MCF 10A (cell line): ENCODE measurements at regions of chr2 and their contacts with region 1.

Region 1: DNA sequence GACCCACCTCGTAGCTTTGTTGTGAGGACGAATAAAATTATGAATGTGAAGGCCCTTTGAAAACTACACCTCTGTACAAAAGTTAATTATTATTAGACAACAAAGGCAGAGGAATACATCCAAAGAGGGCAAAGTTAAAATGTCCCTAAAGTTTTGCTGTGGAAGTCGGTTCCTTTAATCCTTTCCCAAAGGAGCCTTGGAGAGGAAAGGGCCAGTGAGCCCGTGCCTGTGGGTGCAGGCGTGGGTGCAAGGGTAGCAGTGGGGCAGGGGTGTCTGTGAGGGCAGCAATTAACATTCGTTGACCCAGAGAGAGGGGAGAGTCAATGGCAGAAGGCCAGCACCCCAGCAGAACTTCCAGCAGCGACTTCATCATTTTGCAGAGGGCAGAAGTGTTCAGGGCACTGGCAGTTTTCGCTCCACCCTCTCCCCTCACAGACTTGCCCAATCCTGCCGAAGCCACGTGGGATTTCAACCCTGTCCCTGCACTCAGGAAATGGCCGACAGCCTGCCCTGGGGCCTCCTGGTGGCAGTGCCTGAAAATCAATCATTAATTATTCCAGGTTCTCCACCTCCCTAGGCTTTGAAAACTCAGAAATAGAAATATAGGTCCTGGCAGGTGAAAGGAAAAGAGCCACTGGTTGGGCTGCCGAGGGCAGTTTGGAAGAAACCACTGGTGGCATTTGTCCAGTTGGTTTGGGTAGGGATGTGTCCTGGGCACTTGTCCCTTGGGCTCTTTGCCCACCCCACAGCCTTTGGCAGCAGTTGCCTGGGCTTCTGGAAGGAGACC is 4.2 kb upstream of the PAX8 start:
- DNase-seq: peak; percentile 78
- H3K4me3 Mint-ChIP-seq: peak overlapping the region; percentile 33
- H3K27ac Mint-ChIP-seq: peak overlapping the region; percentile 84
- H3K4me1 Mint-ChIP-seq: peaks cover 42% of the 10 kb centered on the region
- H3K27me3 Mint-ChIP-seq: no peaks in the 10 kb centered on the region
- CTCF ChIP-seq: no peak

Region 2: GRCh38 chr2:113211226-113212105 is 71.5 kb before region 1 on chr2:
- CTCF ChIA-PET with region 1: interaction called, 9 read pairs
- POLR2A ChIA-PET with region 1: no interaction called
- intact Hi-C with region 1: loop called (anchors 2 kb)
- DNase-seq: peak; percentile 78
- H3K4me3 Mint-ChIP-seq: no peak overlapping the region
- H3K27ac Mint-ChIP-seq: peak overlapping the region; percentile 92
- H3K4me1 Mint-ChIP-seq: peaks cover 30% of the 10 kb centered on the region
- H3K27me3 Mint-ChIP-seq: no peaks in the 10 kb centered on the region
- CTCF ChIP-seq: no peak

Region 3: DNA sequence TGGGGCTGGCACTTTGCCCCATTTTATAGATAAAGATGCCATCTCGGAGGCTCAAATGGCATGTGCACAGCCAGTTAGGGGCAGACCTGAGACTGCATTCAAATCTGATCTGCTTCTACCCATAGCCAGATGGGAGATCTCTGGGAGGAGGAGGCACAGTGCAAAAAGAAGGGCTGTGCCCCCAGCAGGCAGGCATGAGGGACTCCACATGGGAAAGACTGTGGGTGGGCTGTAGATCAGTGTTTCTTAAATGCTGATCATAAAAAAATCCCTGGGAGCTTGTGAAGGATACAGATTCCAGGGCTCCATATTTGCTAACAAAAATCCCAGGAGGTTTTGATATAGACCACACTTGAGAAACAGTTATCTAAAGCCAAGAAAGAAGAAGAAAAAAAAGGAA is 19.4 kb before region 1 on chr2:
- CTCF ChIA-PET with region 1: no interaction called
- POLR2A ChIA-PET with region 1: no interaction called
- intact Hi-C with region 1: no loop called
- DNase-seq: no peak
- H3K4me3 Mint-ChIP-seq: no peak overlapping the region
- H3K27ac Mint-ChIP-seq: no peak overlapping the region
- H3K4me1 Mint-ChIP-seq: no peaks in the 10 kb centered on the region
- H3K27me3 Mint-ChIP-seq: no peaks in the 10 kb centered on the region
- CTCF ChIP-seq: no peak

Region 4: DNA sequence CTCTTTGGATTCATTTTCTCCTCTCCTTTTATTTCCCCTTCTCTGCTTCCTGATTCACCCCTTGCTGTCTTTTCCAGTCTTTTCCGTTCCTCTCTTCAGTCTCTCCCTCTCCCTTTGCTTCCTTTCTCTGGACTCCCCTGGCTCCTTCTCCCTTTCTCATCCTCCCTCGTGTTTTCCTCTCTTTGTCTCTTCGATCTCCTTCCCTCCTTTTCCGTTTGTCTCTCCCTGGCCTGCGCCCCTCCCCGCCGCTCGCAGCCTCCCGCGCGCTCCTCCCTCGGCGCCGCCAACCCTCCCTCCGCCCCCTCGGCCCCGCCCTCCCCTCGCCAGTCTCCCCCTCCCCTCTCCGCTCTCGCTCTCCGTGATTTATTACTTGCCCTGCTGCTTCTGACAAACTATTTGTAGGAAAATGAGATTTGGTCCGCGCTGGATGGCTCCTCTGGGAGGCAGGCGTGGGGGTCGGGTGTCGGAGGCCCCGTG is 41.8 kb after region 1 on chr2:
- CTCF ChIA-PET with region 1: no interaction called
- POLR2A ChIA-PET with region 1: interaction called, 8 read pairs
- intact Hi-C with region 1: loop called (anchors 2 kb)
- DNase-seq: peak; percentile 71
- H3K4me3 Mint-ChIP-seq: peak overlapping the region; percentile 91
- H3K27ac Mint-ChIP-seq: peak overlapping the region; percentile 21
- H3K4me1 Mint-ChIP-seq: peaks cover 35% of the 10 kb centered on the region
- H3K27me3 Mint-ChIP-seq: no peaks in the 10 kb centered on the region
- CTCF ChIP-seq: no peak